HepG2 (cell line): ENCODE measurements at regions of chr15 and their contacts with region 1.

Region 1: DNA sequence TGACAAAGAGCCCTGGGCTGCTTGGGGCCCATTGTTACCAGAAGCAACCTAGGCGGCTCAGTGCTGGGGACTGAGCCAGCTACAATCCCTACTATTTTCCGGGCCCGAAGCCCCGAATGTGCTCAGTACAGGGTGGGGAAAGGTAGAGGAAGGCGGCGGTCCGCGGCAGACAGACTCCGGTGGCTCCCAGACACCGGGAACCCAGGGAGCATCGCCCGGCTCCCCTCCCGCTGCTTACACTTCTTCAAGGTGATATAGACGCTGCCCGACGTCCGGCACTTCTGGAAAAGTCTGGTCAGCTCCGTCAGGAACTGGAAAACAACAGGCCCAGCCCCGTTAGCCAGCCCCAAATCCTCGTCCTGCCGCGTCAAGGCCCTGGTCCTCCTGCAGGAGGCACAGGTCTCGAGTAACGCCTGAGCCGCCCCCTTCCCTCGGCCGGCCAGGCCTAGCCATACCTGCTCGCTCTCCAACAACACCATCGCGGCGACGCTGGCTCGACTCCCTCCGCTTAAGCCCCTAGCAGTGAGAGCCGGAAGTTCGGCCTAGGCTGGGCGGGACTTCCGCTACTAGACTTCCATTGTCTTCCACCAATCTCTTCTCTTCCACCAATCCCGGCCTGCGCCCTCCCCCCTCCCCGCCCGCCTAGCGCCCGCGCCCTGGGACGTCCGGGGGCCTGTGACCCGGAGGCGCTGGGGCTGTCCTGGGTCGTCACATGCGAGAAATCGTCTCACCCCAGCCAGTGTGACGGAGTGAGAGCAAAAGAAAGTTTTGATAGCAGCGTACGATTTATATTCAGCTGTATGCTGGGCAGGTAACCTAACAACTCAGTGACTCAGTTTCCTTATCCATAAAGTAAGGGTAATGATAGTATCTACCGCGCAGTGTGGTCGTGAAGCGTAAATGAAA is at the start of gene SRP14:
- DNase-seq: peak; percentile 91
- ATAC-seq: peak; percentile 93
- H3K4me3 ChIP-seq: peak within 1 kb of the TSS; percentile 72 to 96 (median 76)
- H3K27ac ChIP-seq: peak within 1 kb of the TSS; percentile 86
- H3K4me1 ChIP-seq: peaks cover 34% of the 10 kb centered on the region
- H3K27me3 ChIP-seq: no peaks in the 10 kb centered on the region; a peak in 2 of 5 replicates
- CTCF ChIP-seq: peak; percentile 15
- EP300 ChIP-seq: 0 out of 4 replicates have a peak, but pooled peaks of 1 of the 2 experiments have one; percentile 17
- POLR2A ChIP-seq: peak; percentile 91 to 95
- RAD21 ChIP-seq: no peak
- total RNA-seq, gene SRP14: 208 and 346 TPM in 2 replicates

Region 2: GRCh38 chr15:40002295-40002694 is 36.6 kb before region 1 on chr15:
- CTCF ChIA-PET with region 1: no interaction called
- POLR2A ChIA-PET with region 1: interaction called, 27 read pairs
- in situ Hi-C with region 1: no loop called
- intact Hi-C with region 1: loop called (anchors 5 kb)
- DNase-seq: peak; percentile 99
- ATAC-seq: peak; percentile 99
- H3K4me3 ChIP-seq: peak overlapping the region; percentile 52 to 63 (median 57); a peak in 5 of 6 replicates
- H3K27ac ChIP-seq: peak overlapping the region; percentile 89
- H3K4me1 ChIP-seq: peaks cover 57% of the 10 kb centered on the region
- H3K27me3 ChIP-seq: no peaks in the 10 kb centered on the region
- CTCF ChIP-seq: 0 out of 2 replicates have a peak, but pooled peaks have one; percentile 3
- EP300 ChIP-seq: peak in 1 of 2 experiments; percentile 83; a peak in 2 of 4 replicates
- POLR2A ChIP-seq: peak; percentile 47 to 65; a peak in 3 of 4 replicates
- RAD21 ChIP-seq: peak; percentile 24; the same call in 1 of the 2 replicates

Region 3: DNA sequence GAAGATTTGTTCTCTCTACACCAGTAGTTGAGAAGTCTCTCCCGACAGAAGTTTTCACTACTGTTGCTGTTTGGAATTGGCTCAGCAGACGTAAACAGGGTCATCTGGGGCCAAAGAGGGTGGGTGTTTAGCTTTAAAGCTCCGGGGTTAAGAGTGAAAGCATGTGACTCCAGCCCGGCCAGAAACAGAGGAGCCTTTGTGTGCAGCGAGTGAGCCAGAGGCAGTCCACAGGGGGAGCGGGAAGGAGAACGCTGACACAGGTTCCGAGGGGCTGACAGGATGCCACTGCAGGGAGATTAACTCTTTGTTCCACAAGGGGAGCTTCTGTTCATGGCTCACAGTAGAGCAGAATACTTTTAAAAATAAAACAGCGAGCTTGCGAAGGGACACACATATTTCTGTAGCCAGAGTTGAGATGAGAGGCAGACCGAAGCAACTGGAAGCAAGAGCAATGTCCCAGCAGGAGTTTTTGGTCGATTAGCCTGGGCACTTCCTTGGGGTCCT is 42.9 kb after region 1 on chr15:
- CTCF ChIA-PET with region 1: no interaction called
- POLR2A ChIA-PET with region 1: interaction called, 20 read pairs
- in situ Hi-C with region 1: no loop called
- intact Hi-C with region 1: no loop called
- DNase-seq: peak; percentile 96
- ATAC-seq: peak; percentile 98
- H3K4me3 ChIP-seq: peak overlapping the region; percentile 46 to 70 (median 69)
- H3K27ac ChIP-seq: peak overlapping the region; percentile 95
- H3K4me1 ChIP-seq: peaks cover 70% of the 10 kb centered on the region
- H3K27me3 ChIP-seq: no peaks in the 10 kb centered on the region; a peak in 1 of 5 replicates
- CTCF ChIP-seq: peak; percentile 33; the same call in 1 of the 2 replicates
- EP300 ChIP-seq: peak; percentile 81 to 92; a peak in 3 of 4 replicates
- POLR2A ChIP-seq: peak; percentile 69 to 74; a peak in 3 of 4 replicates
- RAD21 ChIP-seq: no peak; the same call in 1 of the 2 replicates

Region 4: GRCh38 chr15:40493089-40493840 is 454.4 kb after region 1 on chr15:
- CTCF ChIA-PET with region 1: no interaction called
- POLR2A ChIA-PET with region 1: no interaction called
- in situ Hi-C with region 1: no loop called
- intact Hi-C with region 1: no loop called
- DNase-seq: no peak
- ATAC-seq: no peak
- H3K4me3 ChIP-seq: no peak overlapping the region
- H3K27ac ChIP-seq: no peak overlapping the region
- H3K4me1 ChIP-seq: no peaks in the 10 kb centered on the region
- H3K27me3 ChIP-seq: peaks cover 0 to 16% of the 10 kb centered on the region in 2 experiments; a peak in 2 of 5 replicates
- CTCF ChIP-seq: no peak
- EP300 ChIP-seq: no peak
- POLR2A ChIP-seq: no peak
- RAD21 ChIP-seq: no peak